Calu3 (cell line): ENCODE measurements at regions of chr7 and their contacts with region 1.

Region 1: GRCh38 chr7:100827330-100828227 is at the start of gene EPHB4:
- DNase-seq: peak; percentile 76
- H3K4me3 Mint-ChIP-seq: peak within 1 kb of the TSS; percentile 92
- H3K27ac Mint-ChIP-seq: peak within 1 kb of the TSS; percentile 90
- H3K4me1 Mint-ChIP-seq: peaks cover 39% of the 10 kb centered on the region
- H3K27me3 Mint-ChIP-seq: no peaks in the 10 kb centered on the region
- CTCF ChIP-seq: peak; percentile 42
- total RNA-seq, gene EPHB4: 63.7 and 72.4 TPM in 2 replicates

Region 2: GRCh38 chr7:100803398-100804233 is 24.0 kb before region 1 on chr7:
- CTCF ChIA-PET with region 1: interaction called, 5 read pairs
- intact Hi-C with region 1: loop called (anchors 2 kb)
- DNase-seq: peak; percentile 64
- H3K4me3 Mint-ChIP-seq: peak overlapping the region; percentile 11
- H3K27ac Mint-ChIP-seq: peak overlapping the region; percentile 76
- H3K4me1 Mint-ChIP-seq: peaks cover 42% of the 10 kb centered on the region
- H3K27me3 Mint-ChIP-seq: no peaks in the 10 kb centered on the region
- CTCF ChIP-seq: no peak

Region 3: GRCh38 chr7:100852048-100852872 is 24.7 kb after region 1 on chr7 and contains the start of gene SLC12A9:
- CTCF ChIA-PET with region 1: interaction called, 15 read pairs
- intact Hi-C with region 1: no loop called
- DNase-seq: peak; percentile 87
- H3K4me3 Mint-ChIP-seq: peak within 1 kb of the TSS; percentile 85
- H3K27ac Mint-ChIP-seq: peak within 1 kb of the TSS; percentile 75
- H3K4me1 Mint-ChIP-seq: peaks cover 5% of the 10 kb centered on the region
- H3K27me3 Mint-ChIP-seq: no peaks in the 10 kb centered on the region
- CTCF ChIP-seq: peak; percentile 59
- total RNA-seq, gene SLC12A9: 29.9 and 36.6 TPM in 2 replicates